GM10248 (cell line): ENCODE measurements at regions of chr17 and their contacts with region 1.

Region 1: GRCh38 chr17:8997994-8998628 is 23.2 kb upstream of the NTN1 start:
- DNase-seq: peak; percentile 83
- CTCF ChIP-seq: peak; percentile 95

Region 2: GRCh38 chr17:8806926-8807550 is 191.1 kb before region 1 on chr17:
- CTCF ChIA-PET with region 1: interaction called, 27 read pairs
- POLR2A ChIA-PET with region 1: no interaction called
- DNase-seq: peak; percentile 90
- CTCF ChIP-seq: no peak

Region 3: GRCh38 chr17:8900626-8901585 is 97.2 kb before region 1 on chr17:
- CTCF ChIA-PET with region 1: interaction called, 24 read pairs
- POLR2A ChIA-PET with region 1: no interaction called
- DNase-seq: peak; percentile 48
- CTCF ChIP-seq: peak; percentile 7

Region 4: GRCh38 chr17:8941520-8941919 is 56.6 kb before region 1 on chr17:
- CTCF ChIA-PET with region 1: interaction called, 15 read pairs
- POLR2A ChIA-PET with region 1: no interaction called
- DNase-seq: no peak
- CTCF ChIP-seq: no peak

Region 5: GRCh38 chr17:8965394-8966168 is 32.5 kb before region 1 on chr17 and contains the start of gene PIK3R5:
- CTCF ChIA-PET with region 1: interaction called, 37 read pairs
- POLR2A ChIA-PET with region 1: no interaction called
- DNase-seq: peak; percentile 93
- CTCF ChIP-seq: no peak

Region 6: DNA sequence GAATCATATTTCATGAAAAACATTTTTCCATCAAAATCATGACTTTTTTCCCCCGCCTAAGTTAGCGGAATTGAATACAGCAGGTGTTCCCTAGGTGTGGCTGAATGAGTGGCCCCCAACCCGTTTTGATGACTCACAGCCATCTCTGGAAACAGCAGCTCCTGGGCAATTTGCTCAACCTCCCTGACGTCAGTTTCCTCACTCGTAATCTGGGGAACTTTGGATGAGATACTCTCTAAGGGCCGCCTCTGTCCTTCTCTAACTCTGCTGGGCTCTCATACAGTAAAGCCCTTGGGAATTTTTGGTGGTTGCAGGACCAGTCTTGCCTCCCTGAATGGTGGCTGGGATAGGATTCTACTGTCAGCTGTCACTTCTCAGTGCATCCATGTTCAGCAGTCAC is 11.6 kb after region 1 on chr17:
- CTCF ChIA-PET with region 1: interaction called, 18 read pairs
- POLR2A ChIA-PET with region 1: no interaction called
- DNase-seq: no peak
- CTCF ChIP-seq: no peak